Heart left ventricle (tissue), 16 donors: ENCODE measurements at regions of chr20 and their contacts with region 1.

Region 1: GRCh38 chr20:24917797-24918578 is 31.1 kb upstream of the CST7 start:
- DNase-seq: peak; percentile 58 to 82 (median 66)
- ATAC-seq: peak; percentile 47 to 91 (median 86)
- H3K4me3 ChIP-seq: peak overlapping the region in 2 of 12 donors; percentile 3 to 12
- H3K27ac ChIP-seq: no peak overlapping the region
- H3K4me1 ChIP-seq: peaks cover 0 to 10% (median 2%) of the 10 kb centered on the region in 12 donors
- H3K27me3 ChIP-seq: peaks cover 0 to 4% (median 0%) of the 10 kb centered on the region in 9 donors
- CTCF ChIP-seq: peak; percentile 69 to 89 (median 80)
- POLR2A ChIP-seq: no peak

Region 2: DNA sequence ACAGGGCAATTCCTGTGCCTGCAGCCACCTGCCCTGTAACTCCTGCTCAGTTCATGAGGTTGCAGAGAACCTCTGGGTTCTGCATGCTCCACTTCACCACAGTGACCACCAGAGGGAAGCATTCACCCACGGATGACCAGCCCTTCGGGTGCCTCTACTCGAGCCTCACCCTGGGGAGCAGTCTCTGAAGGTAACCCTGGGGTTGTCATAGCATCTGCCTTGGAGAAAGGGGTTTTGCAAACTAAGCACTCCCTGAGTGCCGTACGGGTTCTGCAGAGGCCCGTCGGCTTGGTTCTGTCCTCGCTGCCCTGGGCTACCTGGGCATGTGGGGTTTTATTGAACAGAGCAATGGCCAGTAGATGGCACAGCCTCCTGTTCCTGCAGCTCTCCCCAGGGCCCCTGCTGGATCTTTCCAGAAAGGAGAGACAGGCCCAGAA is 1028.2 kb before region 1 on chr20:
- intact Hi-C with region 1: loop called in 3 of 10 experiments (anchors 5 kb)
- DNase-seq: peak in 1 of 5 donors; percentile 39
- ATAC-seq: peak; percentile 80 to 90 (median 90)
- H3K4me3 ChIP-seq: no peak overlapping the region
- H3K27ac ChIP-seq: no peak overlapping the region
- H3K4me1 ChIP-seq: no peaks in the 10 kb centered on the region
- H3K27me3 ChIP-seq: peaks cover 0 to 14% (median 0%) of the 10 kb centered on the region in 9 donors
- CTCF ChIP-seq: peak; percentile 49 to 77 (median 68)
- POLR2A ChIP-seq: no peak

Region 3: DNA sequence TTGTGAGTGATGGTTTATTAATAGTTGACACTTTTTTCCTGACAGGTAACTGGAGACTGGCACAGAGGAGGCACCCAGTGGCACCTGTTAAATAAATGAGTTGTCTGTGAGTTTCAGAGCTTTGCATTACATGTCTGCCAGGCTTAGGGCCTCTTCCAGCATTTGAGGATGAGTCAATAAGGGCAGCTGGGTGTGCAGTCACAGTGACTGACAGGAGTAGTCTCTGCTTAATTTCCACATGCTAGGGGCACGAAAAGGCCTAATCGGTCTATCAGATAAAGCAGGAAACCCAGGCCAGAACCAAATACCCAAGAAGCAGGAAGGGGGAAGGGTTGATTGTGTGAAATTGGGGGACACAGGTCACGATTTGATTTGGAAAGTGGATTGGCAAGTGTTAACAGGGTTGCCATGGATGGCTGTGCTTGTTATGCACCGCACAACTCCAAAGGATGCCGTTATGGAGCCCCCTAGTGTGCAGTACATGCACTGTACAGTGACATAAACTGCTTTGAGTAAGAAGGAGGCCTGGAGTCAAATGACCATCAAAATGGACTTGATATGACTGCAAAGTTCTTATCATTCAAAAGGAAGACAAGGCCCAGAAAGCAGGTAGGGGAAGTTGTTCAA is 817.5 kb before region 1 on chr20:
- intact Hi-C with region 1: loop called in 3 of 10 experiments (anchors 5 to 10 kb)
- DNase-seq: peak in 4 of 5 donors; percentile 30 to 54 (median 38)
- ATAC-seq: peak; percentile 74 to 92 (median 90)
- H3K4me3 ChIP-seq: no peak overlapping the region
- H3K27ac ChIP-seq: no peak overlapping the region
- H3K4me1 ChIP-seq: no peaks in the 10 kb centered on the region
- H3K27me3 ChIP-seq: peaks cover 0 to 47% (median 3%) of the 10 kb centered on the region in 9 donors
- CTCF ChIP-seq: peak; percentile 61 to 80 (median 72)
- POLR2A ChIP-seq: no peak

Region 4: GRCh38 chr20:24160563-24161375 is 757.2 kb before region 1 on chr20:
- intact Hi-C with region 1: loop called in 7 of 10 experiments (anchors 2 to 5 kb)
- DNase-seq: peak in 3 of 5 donors; percentile 14 to 42 (median 39)
- ATAC-seq: peak in 3 of 4 donors; percentile 48 to 84 (median 73)
- H3K4me3 ChIP-seq: no peak overlapping the region
- H3K27ac ChIP-seq: no peak overlapping the region
- H3K4me1 ChIP-seq: peaks cover 0 to 5% (median 0%) of the 10 kb centered on the region in 12 donors
- H3K27me3 ChIP-seq: no peaks in the 10 kb centered on the region
- CTCF ChIP-seq: peak; percentile 49 to 88 (median 70)
- POLR2A ChIP-seq: no peak

Region 5: GRCh38 chr20:24851346-24852019 is 66.5 kb before region 1 on chr20:
- intact Hi-C with region 1: loop called in 1 of 10 experiments (anchors 10 kb)
- DNase-seq: no peak
- ATAC-seq: no peak
- H3K4me3 ChIP-seq: no peak overlapping the region
- H3K27ac ChIP-seq: no peak overlapping the region
- H3K4me1 ChIP-seq: no peaks in the 10 kb centered on the region
- H3K27me3 ChIP-seq: peaks cover 0 to 14% (median 0%) of the 10 kb centered on the region in 9 donors
- CTCF ChIP-seq: no peak
- POLR2A ChIP-seq: no peak

Region 6: DNA sequence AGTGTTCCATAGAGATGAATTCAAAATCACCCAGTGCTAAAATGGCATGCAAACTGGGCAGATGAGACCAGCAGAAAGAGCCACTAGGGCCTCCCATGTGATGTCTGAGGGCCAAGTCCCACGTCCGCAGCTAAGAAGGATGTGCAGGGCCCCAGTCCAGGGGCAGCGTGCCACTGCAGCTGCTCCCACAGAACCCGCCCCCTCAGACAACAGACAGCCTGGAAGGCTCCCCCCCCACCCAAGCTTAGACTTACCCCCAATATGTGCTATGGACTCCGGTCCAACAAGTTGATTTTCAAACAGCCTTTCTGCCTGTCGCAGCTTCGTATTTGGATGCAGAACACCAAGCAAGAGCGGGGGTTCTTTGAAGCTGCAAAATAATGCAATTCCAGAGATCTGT is 60.5 kb after region 1 on chr20:
- intact Hi-C with region 1: no loop called
- DNase-seq: no peak
- ATAC-seq: no peak
- H3K4me3 ChIP-seq: no peak overlapping the region
- H3K27ac ChIP-seq: no peak overlapping the region
- H3K4me1 ChIP-seq: peaks cover 0 to 32% (median 0%) of the 10 kb centered on the region in 12 donors
- H3K27me3 ChIP-seq: no peaks in the 10 kb centered on the region
- CTCF ChIP-seq: no peak
- POLR2A ChIP-seq: no peak

Region 7: DNA sequence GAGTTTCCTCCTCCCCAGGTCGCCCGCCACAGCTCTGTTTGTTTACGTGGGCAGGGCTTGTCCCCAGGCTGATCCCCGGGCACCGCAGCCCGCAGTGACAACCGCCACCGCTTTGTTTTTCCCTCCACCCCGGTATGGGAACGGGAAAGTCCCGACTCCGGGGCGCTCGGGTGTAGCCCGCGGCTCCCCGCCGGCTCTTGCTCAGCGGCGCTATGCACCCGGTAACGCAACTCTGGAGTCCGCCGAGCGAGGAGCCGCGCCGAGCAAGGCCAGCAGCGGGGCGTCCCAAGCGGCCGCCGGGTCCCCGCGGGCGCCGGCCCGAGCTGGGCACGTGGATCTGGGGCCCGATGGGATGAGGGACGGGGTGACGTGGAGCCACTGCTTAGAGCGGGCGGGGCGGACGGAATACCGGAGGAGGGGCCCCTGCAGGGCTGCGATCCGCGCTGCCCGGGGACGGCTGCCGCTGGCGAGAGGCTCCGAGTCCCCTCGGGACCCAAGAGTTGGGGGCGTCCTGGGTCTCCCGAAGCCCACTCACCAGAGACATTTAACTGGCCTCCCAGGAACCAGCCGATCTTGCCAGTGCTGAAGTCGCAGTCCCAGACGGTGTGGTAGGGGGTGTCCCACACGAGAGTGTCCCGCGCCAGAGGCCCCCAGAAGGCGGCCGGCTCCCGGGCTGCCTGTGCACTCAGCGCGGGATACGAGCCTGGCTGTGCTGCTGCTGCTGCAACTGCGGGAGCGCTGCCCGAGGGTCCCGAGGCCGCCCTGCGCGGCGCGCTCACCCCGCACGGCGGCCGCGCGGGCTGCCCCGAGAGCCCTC is 139.5 kb after region 1 on chr20:
- intact Hi-C with region 1: no loop called
- DNase-seq: peak; percentile 85 to 90 (median 86)
- ATAC-seq: peak; percentile 56 to 84 (median 80)
- H3K4me3 ChIP-seq: peak overlapping the region; percentile 65 to 96 (median 88)
- H3K27ac ChIP-seq: peak overlapping the region; percentile 91 to 100 (median 97)
- H3K4me1 ChIP-seq: peaks cover 29 to 62% (median 49%) of the 10 kb centered on the region in 12 donors
- H3K27me3 ChIP-seq: no peaks in the 10 kb centered on the region
- CTCF ChIP-seq: peak in 1 of 12 donors; percentile 14
- POLR2A ChIP-seq: peak in 1 of 2 donors; percentile 56

Region 8: DNA sequence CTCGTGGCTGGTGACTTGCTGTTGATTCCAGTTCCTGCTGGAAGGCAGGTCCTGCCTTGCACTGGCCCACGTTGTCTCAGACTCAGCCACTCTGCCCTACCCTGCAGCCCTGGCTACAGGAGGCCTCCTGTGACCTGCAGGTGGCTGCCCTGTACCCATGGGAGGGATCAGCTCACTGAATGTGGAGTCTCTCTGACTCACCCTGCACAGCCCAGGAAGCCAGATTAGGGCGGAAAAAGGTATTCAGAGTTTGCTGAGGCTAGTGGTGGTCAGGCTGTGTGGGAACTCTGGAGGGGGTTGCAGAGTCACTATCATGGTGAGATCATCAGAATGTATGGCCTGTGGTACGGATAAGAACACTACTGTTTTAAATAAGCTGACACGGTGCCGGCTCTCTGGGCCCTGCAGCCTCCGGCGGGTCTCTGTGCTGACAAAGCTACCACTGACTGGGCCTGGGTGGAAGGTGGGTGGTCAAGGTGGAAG is 305.2 kb after region 1 on chr20:
- intact Hi-C with region 1: no loop called
- DNase-seq: no peak
- ATAC-seq: no peak
- H3K4me3 ChIP-seq: no peak overlapping the region
- H3K27ac ChIP-seq: peak overlapping the region in 10 of 12 donors; percentile 40 to 96 (median 74)
- H3K4me1 ChIP-seq: peaks cover 11 to 95% (median 51%) of the 10 kb centered on the region in 12 donors
- H3K27me3 ChIP-seq: no peaks in the 10 kb centered on the region
- CTCF ChIP-seq: no peak
- POLR2A ChIP-seq: no peak